MCF 10A (cell line): ENCODE measurements at regions of chr4 and their contacts with region 1.

Region 1: GRCh38 chr4:39353478-39354253 is 12.5 kb downstream of the RFC1 start:
- DNase-seq: peak; percentile 55
- H3K4me3 Mint-ChIP-seq: peak overlapping the region; percentile 78
- H3K27ac Mint-ChIP-seq: peak overlapping the region; percentile 99
- H3K4me1 Mint-ChIP-seq: peaks cover 27% of the 10 kb centered on the region
- H3K27me3 Mint-ChIP-seq: no peaks in the 10 kb centered on the region
- CTCF ChIP-seq: no peak

Region 2: GRCh38 chr4:39341075-39341725 is 12.5 kb before region 1 on chr4:
- CTCF ChIA-PET with region 1: interaction called, 3 read pairs
- POLR2A ChIA-PET with region 1: interaction called, 11 read pairs
- intact Hi-C with region 1: no loop called
- DNase-seq: no peak
- H3K4me3 Mint-ChIP-seq: no peak overlapping the region
- H3K27ac Mint-ChIP-seq: no peak overlapping the region
- H3K4me1 Mint-ChIP-seq: peaks cover 6% of the 10 kb centered on the region
- H3K27me3 Mint-ChIP-seq: no peaks in the 10 kb centered on the region
- CTCF ChIP-seq: no peak

Region 3: GRCh38 chr4:39365830-39366771 is 12.4 kb after region 1 on chr4 and contains the start of gene RFC1:
- CTCF ChIA-PET with region 1: interaction called, 3 read pairs
- POLR2A ChIA-PET with region 1: interaction called, 105 read pairs
- intact Hi-C with region 1: no loop called
- DNase-seq: peak; percentile 91
- H3K4me3 Mint-ChIP-seq: peak within 1 kb of the TSS; percentile 91
- H3K27ac Mint-ChIP-seq: peak within 1 kb of the TSS; percentile 91
- H3K4me1 Mint-ChIP-seq: peaks cover 28% of the 10 kb centered on the region
- H3K27me3 Mint-ChIP-seq: no peaks in the 10 kb centered on the region
- CTCF ChIP-seq: no peak
- total RNA-seq, gene RFC1: 84.7 and 99.5 TPM in 2 replicates